ENCODE measurements at regions of chr1 and their contacts with region 1.

Region 1: DNA sequence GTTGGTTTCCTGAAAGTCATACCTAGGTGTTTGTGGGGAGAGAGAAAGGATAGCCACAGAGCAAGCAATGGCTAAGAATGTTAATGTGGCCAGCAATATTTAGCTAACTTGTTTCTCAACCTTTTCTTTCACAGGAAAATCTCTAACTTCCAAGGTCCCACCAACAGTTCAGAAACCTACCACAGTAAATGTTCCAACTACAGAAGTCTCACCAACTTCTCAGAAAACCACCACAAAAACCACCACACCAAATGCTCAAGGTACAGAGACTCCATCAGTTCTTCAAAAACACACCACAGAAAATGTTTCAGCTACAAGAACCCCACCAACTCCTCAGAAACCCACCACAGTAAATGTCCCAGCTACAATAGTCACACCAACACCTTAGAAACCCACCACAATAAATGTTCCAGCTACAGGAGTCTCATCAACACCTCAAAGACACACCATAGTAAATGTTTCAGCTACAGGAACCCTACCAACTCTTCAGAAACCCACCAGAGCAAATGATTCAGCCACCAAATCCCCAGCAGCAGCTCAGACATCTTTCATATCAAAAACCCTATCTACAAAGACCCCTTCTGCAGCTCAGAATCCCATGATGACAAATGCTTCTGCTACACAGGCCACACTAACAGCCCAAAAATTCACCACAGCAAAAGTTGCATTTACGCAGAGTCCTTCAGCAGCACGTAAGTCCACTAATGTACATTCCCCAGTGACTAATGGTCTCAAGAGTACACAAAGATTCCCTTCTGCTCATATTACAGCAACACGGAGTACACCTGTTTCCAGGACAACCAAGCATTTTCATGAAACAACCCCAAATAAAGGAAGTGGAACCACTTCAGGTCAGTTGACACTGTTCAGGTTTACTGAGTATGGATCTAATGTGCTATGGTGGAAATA is 15.3 kb downstream of the CD55 start:
- DNase-seq: peak; percentile 55
- ATAC-seq: peak; percentile 67
- H3K4me3 Mint-ChIP-seq: peak overlapping the region; percentile 8
- H3K27ac Mint-ChIP-seq: peak overlapping the region; percentile 86
- H3K4me1 Mint-ChIP-seq: peaks cover 69% of the 10 kb centered on the region
- H3K27me3 Mint-ChIP-seq: no peaks in the 10 kb centered on the region

Region 2: GRCh38 chr1:206635080-206635977 is 701.5 kb before region 1 on chr1 and contains the start of gene DYRK3:
- CTCF ChIA-PET with region 1: no interaction called
- POLR2A ChIA-PET with region 1: no interaction called
- intact Hi-C with region 1: no loop called
- DNase-seq: peak; percentile 97
- ATAC-seq: peak; percentile 93
- H3K4me3 Mint-ChIP-seq: peak within 1 kb of the TSS; percentile 76
- H3K27ac Mint-ChIP-seq: peak within 1 kb of the TSS; percentile 87
- H3K4me1 Mint-ChIP-seq: peaks cover 27% of the 10 kb centered on the region
- H3K27me3 Mint-ChIP-seq: peaks cover 7% of the 10 kb centered on the region
- total RNA-seq, gene DYRK3: 8.3 to 8.7 TPM

Region 3: GRCh38 chr1:206784471-206784903 is 552.3 kb before region 1 on chr1:
- CTCF ChIA-PET with region 1: no interaction called
- POLR2A ChIA-PET with region 1: no interaction called
- intact Hi-C with region 1: no loop called
- DNase-seq: peak; percentile 94
- ATAC-seq: peak; percentile 85
- H3K4me3 Mint-ChIP-seq: peak overlapping the region; percentile 18
- H3K27ac Mint-ChIP-seq: peak overlapping the region; percentile 71
- H3K4me1 Mint-ChIP-seq: peaks cover 57% of the 10 kb centered on the region
- H3K27me3 Mint-ChIP-seq: peaks cover 22% of the 10 kb centered on the region

Region 4: DNA sequence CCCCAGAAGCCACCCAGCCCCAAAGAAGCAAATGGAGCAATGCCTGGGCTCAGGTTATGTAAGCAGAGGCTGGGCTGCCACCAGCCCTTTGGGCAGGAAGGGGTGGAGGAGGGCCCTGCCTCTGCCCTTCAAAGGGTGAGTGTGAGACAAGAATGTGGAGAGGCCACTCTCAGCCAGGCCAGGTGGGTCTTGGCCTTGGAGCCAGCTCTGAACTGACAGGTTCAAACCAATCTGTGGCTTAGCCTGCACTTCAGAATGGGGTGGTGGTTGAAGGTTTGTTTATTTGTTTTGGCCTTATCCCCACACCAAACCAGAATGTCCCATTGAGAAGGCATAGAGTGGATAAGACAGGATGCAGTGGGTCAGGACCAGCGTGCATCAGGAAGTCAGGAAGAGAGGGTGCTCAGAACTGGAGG is 334.1 kb before region 1 on chr1:
- CTCF ChIA-PET with region 1: no interaction called
- POLR2A ChIA-PET with region 1: no interaction called
- intact Hi-C with region 1: no loop called
- DNase-seq: no peak
- ATAC-seq: no peak
- H3K4me3 Mint-ChIP-seq: no peak overlapping the region
- H3K27ac Mint-ChIP-seq: no peak overlapping the region
- H3K4me1 Mint-ChIP-seq: peaks cover 2% of the 10 kb centered on the region
- H3K27me3 Mint-ChIP-seq: peaks cover 6% of the 10 kb centered on the region

Region 5: DNA sequence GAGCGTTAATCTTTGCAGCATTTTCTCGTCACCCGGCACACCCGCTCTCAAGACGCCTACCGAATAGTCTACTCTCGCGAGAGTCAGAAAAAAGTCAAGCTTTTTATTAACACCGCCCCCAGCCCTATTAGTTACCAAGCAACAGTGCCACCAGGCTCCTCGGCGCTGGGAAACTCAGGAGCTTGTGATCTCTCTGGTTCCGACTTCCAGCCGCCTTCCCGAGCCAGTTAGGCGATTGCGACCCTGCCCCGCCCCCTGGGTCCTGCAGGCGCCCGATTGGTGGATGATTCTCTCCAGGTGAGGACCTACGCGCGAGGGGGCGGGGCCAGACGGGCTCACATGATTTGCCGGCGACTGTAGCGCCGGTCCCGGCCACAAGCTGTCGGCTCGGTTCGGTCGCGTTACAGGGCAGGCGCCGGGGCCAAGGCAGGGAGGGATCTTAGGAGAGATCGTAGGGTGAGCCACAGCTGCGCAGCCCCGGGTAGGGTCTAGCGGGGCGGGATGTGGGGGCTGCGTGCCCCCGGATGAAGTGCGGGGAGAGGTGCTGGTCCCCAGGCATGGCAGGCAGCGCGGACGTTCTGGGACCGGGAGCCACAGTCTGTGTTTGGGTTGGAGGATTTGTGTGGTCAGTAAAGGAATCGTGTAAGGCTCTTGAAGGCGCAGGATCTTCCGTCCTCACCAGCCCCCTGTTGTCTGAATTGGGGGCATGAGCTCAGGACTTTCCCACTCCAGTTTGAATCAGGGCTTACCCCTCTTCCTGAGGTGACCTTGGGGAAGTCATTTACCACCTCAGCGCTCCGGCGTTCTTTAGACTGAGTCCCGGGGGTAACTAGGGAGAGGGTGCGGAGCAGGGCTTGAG is 283.7 kb before region 1 on chr1 and contains the start of gene PFKFB2:
- CTCF ChIA-PET with region 1: no interaction called
- POLR2A ChIA-PET with region 1: no interaction called
- intact Hi-C with region 1: loop called in 1 of 2 experiments (anchors 5 kb)
- DNase-seq: peak; percentile 96
- ATAC-seq: peak; percentile 83
- H3K4me3 Mint-ChIP-seq: peak within 1 kb of the TSS; percentile 99
- H3K27ac Mint-ChIP-seq: peak within 1 kb of the TSS; percentile 89
- H3K4me1 Mint-ChIP-seq: peaks cover 39% of the 10 kb centered on the region
- H3K27me3 Mint-ChIP-seq: no peaks in the 10 kb centered on the region
- total RNA-seq, gene PFKFB2: 3.1 to 3.5 TPM

Region 6: GRCh38 chr1:207097871-207098324 is 238.9 kb before region 1 on chr1:
- CTCF ChIA-PET with region 1: no interaction called
- POLR2A ChIA-PET with region 1: no interaction called
- intact Hi-C with region 1: loop called in 1 of 2 experiments (anchors 1 kb)
- DNase-seq: peak; percentile 69
- ATAC-seq: peak; percentile 99
- H3K4me3 Mint-ChIP-seq: no peak overlapping the region
- H3K27ac Mint-ChIP-seq: peak overlapping the region; percentile 79
- H3K4me1 Mint-ChIP-seq: peaks cover 14% of the 10 kb centered on the region
- H3K27me3 Mint-ChIP-seq: peaks cover 13% of the 10 kb centered on the region

Region 7: DNA sequence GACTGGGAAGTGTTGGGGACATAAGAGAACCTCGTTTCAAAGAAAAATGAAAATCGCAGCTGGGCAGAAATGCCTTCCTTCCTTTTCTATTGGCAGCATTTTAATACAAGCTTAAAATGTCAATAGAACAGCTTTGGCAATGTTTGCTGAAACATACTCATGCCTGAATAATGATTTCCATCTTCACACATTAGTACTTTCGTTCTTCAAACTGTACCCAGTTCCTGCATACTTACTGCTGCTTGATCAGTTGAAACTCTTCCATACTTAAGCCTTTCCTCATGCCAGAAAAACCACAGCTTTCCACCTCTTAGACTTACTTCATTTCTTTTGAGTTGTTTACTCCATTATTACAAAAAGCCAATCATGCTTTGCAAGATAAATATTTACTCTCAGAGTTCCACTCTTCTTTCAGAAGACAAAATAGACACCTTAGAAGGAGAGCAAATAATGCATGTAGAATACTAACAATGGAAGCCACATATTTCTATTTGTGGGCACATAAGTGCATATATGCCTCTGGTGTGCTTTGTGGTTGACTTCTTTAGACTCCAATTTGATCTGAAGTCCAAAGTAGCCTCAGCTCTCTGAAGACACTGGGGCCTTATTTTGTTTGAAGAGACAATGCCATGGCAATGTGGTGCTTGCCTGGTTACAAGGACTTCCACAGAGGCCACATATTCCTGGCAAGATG is 38.0 kb before region 1 on chr1:
- CTCF ChIA-PET with region 1: no interaction called
- POLR2A ChIA-PET with region 1: no interaction called
- intact Hi-C with region 1: no loop called
- DNase-seq: no peak
- ATAC-seq: no peak
- H3K4me3 Mint-ChIP-seq: no peak overlapping the region
- H3K27ac Mint-ChIP-seq: no peak overlapping the region
- H3K4me1 Mint-ChIP-seq: peaks cover 16% of the 10 kb centered on the region
- H3K27me3 Mint-ChIP-seq: no peaks in the 10 kb centered on the region

Region 8: DNA sequence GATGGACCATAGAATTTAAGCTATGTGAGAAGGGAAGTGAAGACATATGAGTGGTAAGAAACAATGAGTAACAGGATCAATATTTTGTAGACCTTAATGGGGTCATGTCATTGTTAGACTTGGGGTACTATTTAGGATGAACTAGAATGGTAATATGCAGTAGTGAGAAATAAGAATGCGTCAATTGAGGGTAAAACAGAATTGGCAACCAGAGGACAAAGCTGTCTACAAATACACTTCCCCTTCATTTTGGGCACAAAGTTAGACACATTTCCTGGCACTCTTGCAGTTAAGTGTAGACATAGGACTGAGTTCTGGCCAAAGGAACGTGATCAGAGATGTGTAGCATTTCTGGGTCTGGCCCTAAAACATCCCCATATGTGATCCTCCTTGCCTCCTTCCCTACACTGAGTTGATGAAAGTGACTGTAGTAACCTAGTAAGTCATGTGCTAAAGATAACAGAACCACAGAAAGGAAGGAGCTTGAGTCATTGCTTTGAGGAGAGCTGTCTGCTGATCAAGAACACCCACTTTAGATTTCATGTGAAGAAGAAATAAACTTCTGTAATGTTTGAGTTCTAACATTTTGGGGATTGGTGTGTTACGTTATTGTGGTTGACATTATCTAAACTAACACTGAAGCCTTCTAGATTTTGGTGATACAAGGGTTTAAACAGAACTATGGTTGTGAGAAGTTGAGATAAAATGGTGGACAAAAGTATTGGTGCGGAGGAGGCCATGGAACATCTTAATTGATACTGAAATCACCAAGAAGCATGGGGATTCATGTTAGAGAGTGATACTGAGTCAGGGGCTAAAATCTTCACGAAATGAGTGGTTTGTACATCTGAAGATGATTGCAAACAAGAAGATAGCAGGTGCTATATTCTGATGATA is 26.4 kb after region 1 on chr1:
- CTCF ChIA-PET with region 1: interaction called, 23 read pairs
- POLR2A ChIA-PET with region 1: interaction called, 17 read pairs
- intact Hi-C with region 1: loop called (anchors 1 kb)
- DNase-seq: peak; percentile 37
- ATAC-seq: peak; percentile 89
- H3K4me3 Mint-ChIP-seq: no peak overlapping the region
- H3K27ac Mint-ChIP-seq: no peak overlapping the region
- H3K4me1 Mint-ChIP-seq: peaks cover 2% of the 10 kb centered on the region
- H3K27me3 Mint-ChIP-seq: no peaks in the 10 kb centered on the region

Region 9: DNA sequence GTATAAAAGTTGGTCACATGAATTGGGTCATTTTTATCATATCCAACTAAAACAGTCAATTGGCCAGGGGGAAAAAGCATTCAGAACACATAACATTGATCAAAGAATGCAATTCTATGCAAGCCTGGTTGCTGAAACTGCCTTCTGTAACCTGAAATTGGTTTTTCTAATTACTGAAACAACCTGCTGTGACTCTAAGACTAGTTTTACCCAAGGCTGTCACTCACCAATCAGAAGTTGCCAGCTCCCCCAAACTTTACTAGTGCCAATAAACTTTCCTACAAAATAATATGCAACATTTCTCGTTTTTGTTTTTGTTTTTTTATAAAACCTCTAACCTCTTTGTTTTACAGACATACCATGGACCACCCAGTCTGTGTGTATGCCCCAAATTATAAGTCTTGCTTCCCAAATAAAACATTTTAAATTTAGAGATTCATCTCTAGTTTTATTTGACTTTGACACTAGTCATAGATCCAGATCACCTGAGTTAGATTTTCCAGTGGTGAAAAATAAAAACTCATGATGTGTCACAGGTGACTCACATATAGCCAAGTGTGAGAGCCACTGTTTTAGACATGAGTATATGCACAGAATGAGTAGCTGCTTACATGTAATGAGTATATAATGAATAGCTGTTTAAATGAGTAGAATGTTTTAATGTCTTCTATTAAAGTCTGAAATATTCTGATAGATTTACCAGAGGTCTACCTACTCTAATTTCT is 53.1 kb after region 1 on chr1:
- CTCF ChIA-PET with region 1: interaction called, 4 read pairs
- POLR2A ChIA-PET with region 1: interaction called, 3 read pairs
- intact Hi-C with region 1: loop called (anchors 1 kb)
- DNase-seq: peak; percentile 29
- ATAC-seq: peak; percentile 98
- H3K4me3 Mint-ChIP-seq: no peak overlapping the region
- H3K27ac Mint-ChIP-seq: peak overlapping the region; percentile 83
- H3K4me1 Mint-ChIP-seq: peaks cover 19% of the 10 kb centered on the region
- H3K27me3 Mint-ChIP-seq: no peaks in the 10 kb centered on the region

Region 10: GRCh38 chr1:207414606-207415108 is 77.8 kb after region 1 on chr1:
- CTCF ChIA-PET with region 1: no interaction called
- POLR2A ChIA-PET with region 1: interaction called, 3 read pairs
- intact Hi-C with region 1: loop called (anchors 2 to 5 kb)
- DNase-seq: peak; percentile 75
- ATAC-seq: peak; percentile 74
- H3K4me3 Mint-ChIP-seq: no peak overlapping the region
- H3K27ac Mint-ChIP-seq: peak overlapping the region; percentile 10
- H3K4me1 Mint-ChIP-seq: peaks cover 37% of the 10 kb centered on the region
- H3K27me3 Mint-ChIP-seq: peaks cover 4% of the 10 kb centered on the region